HepG2 (cell line): ENCODE measurements at regions of chr20 and their contacts with region 1.

Region 1: DNA sequence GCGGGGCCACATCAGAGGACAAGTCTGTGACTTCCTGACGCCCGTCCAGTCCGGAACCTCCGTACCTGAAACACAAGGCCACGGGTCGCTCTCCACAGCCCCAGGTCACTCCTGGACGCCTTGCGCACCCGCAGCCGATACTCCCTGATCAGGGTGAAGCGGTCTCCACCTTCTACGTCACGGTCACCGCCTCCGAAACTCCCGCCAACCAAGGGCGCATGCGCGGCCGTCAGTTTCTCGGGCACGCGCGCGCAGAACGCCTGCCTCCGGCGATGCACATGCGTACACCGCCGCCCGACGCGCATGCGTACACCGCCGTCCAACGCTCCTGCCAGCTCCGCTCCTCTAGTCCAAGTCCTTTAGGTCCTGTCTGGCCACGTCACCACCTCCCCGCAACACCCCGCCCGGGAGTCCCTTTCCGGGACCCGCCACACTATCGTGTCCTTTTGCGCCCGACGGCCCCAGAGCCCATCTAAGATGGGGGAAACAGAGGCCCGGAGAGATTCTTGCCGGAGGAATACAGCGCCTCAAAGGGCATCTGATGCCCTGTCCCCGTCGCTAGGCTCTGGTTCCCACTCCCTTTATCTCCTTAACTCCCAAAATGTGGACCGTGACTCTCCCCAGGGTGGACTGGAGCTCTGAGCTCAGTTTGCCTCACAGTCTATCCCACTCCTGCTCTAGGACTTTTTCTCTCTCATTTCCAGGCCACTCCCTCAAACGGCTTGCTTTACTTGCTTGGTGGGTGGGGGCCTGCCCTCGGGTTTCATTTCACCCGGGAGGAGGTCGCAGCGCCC is at the start of gene DSN1:
- DNase-seq: peak; percentile 98
- ATAC-seq: peak; percentile 87
- H3K4me3 ChIP-seq: peak within 1 kb of the TSS; percentile 67 to 99 (median 92)
- H3K27ac ChIP-seq: peak within 1 kb of the TSS; percentile 94
- H3K4me1 ChIP-seq: peaks cover 34% of the 10 kb centered on the region
- H3K27me3 ChIP-seq: peaks cover 0 to 2% of the 10 kb centered on the region in 2 experiments; a peak in 2 of 5 replicates
- CTCF ChIP-seq: no peak; the same call in 1 of the 2 replicates
- EP300 ChIP-seq: no peak; a peak in 1 of 4 replicates
- POLR2A ChIP-seq: peak; percentile 85 to 94
- RAD21 ChIP-seq: peak; percentile 82
- total RNA-seq, gene DSN1: 53.7 and 82.4 TPM in 2 replicates

Region 2: GRCh38 chr20:36647196-36648121 is 126.3 kb before region 1 on chr20:
- CTCF ChIA-PET with region 1: no interaction called
- POLR2A ChIA-PET with region 1: no interaction called
- in situ Hi-C with region 1: no loop called
- intact Hi-C with region 1: no loop called
- DNase-seq: peak; percentile 96
- ATAC-seq: peak; percentile 77
- H3K4me3 ChIP-seq: peak overlapping the region in 1 of 3 experiments; percentile 3; a peak in 1 of 6 replicates
- H3K27ac ChIP-seq: peak overlapping the region; percentile 59
- H3K4me1 ChIP-seq: peaks cover 68% of the 10 kb centered on the region
- H3K27me3 ChIP-seq: no peaks in the 10 kb centered on the region
- CTCF ChIP-seq: no peak
- EP300 ChIP-seq: peak in 1 of 2 experiments; percentile 62; a peak in 2 of 4 replicates
- POLR2A ChIP-seq: no peak
- RAD21 ChIP-seq: no peak

Region 3: GRCh38 chr20:36745927-36746659 is 27.7 kb before region 1 on chr20 and contains the start of gene NDRG3:
- CTCF ChIA-PET with region 1: no interaction called
- POLR2A ChIA-PET with region 1: interaction called, 13 read pairs
- in situ Hi-C with region 1: no loop called
- intact Hi-C with region 1: no loop called
- DNase-seq: peak; percentile 96
- ATAC-seq: peak; percentile 87
- H3K4me3 ChIP-seq: peak within 1 kb of the TSS; percentile 75 to 98 (median 93)
- H3K27ac ChIP-seq: peak within 1 kb of the TSS; percentile 70
- H3K4me1 ChIP-seq: peaks cover 18% of the 10 kb centered on the region
- H3K27me3 ChIP-seq: no peaks in the 10 kb centered on the region; a peak in 1 of 5 replicates
- CTCF ChIP-seq: 0 out of 2 replicates have a peak, but pooled peaks have one; percentile 4
- EP300 ChIP-seq: 0 out of 4 replicates have a peak, but pooled peaks of 1 of the 2 experiments have one; percentile 22
- POLR2A ChIP-seq: peak; percentile 83 to 84
- RAD21 ChIP-seq: no peak
- total RNA-seq, gene NDRG3: 36.0 and 43.3 TPM in 2 replicates

Region 4: DNA sequence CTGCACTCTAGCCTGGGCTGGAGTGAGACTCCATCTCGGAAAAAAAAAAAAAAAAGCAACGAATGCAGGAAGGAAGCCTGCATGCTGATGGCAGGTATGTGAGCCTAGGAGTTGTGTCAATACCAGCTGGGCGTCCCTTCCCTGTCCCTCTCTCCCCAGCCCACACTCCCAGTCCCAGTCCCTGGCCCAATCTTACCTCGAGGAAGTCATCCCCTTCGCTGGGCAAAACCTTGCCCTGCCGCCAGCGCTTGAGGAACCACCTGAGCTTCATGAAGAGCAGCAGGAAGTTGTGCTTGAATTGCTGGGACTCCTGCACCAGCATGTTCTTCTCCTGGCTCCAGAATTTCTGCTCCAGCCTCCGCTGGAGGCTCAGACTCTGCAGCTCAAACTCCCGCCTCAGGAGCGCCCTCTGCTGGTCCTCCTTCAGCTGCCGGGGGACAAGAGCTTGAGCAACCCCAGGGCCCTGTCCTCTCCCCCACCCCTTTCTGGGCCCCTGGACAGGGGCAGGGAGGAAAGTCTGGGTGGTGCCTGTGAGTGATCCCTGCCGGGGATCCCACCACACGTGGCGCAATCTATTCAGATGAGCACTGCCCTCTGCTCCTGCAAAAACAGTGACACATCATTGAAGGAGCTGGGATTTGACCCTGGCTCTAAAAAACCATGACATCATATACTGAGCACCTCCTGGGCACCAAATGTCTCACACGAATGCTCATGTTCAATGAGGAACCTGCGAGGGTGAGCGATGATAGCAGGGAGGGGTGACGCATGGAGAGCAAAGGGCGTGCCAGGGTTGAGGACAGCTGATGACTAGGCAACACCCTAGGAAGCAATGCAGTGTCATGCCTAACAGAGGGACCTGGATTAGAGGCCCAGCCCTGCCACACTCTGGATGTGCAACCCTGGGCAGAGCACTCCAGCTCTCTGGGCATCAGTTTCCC is 34.8 kb after region 1 on chr20:
- CTCF ChIA-PET with region 1: no interaction called
- POLR2A ChIA-PET with region 1: interaction called, 10 read pairs
- in situ Hi-C with region 1: no loop called
- intact Hi-C with region 1: loop called (anchors 1 kb)
- DNase-seq: peak; percentile 70
- ATAC-seq: peak; percentile 88
- H3K4me3 ChIP-seq: no peak overlapping the region
- H3K27ac ChIP-seq: peak overlapping the region; percentile 19
- H3K4me1 ChIP-seq: peaks cover 9% of the 10 kb centered on the region
- H3K27me3 ChIP-seq: no peaks in the 10 kb centered on the region
- CTCF ChIP-seq: peak; percentile 96
- EP300 ChIP-seq: peak in 1 of 2 experiments; percentile 34; a peak in 1 of 4 replicates
- POLR2A ChIP-seq: no peak
- RAD21 ChIP-seq: peak; percentile 83

Region 5: DNA sequence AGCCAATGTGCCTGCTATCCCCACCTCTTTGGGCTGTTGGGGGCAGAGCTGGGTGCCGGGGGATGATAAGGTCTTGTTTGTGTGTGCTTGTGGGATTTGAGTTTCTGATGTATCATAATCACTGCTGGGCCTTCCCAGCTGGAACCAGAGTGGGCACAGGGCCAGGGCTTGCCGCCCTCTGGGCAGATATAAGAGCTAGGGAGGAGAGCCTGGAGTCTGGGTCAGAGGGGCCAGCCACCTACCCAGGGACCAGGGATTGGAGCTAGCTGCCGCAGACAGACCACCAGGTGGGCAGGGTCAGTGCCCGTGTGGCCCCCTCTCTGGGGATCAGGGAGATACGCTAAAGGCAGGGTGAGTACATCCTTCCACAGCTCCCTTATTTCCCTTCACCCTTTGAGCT is 99.1 kb after region 1 on chr20:
- CTCF ChIA-PET with region 1: no interaction called
- POLR2A ChIA-PET with region 1: interaction called, 10 read pairs
- in situ Hi-C with region 1: no loop called
- intact Hi-C with region 1: no loop called
- DNase-seq: no peak
- ATAC-seq: no peak
- H3K4me3 ChIP-seq: peak overlapping the region in 1 of 3 experiments; percentile 64; a peak in 1 of 6 replicates
- H3K27ac ChIP-seq: no peak overlapping the region
- H3K4me1 ChIP-seq: peaks cover 63% of the 10 kb centered on the region
- H3K27me3 ChIP-seq: no peaks in the 10 kb centered on the region
- CTCF ChIP-seq: no peak
- EP300 ChIP-seq: no peak
- POLR2A ChIP-seq: no peak
- RAD21 ChIP-seq: no peak